ACHN (cell line): ENCODE measurements at regions of chr22 and their contacts with region 1.

Region 1: GRCh38 chr22:26450453-26451185 is 21.6 kb downstream of the ASPHD2 start:
- DNase-seq: no peak

Region 2: DNA sequence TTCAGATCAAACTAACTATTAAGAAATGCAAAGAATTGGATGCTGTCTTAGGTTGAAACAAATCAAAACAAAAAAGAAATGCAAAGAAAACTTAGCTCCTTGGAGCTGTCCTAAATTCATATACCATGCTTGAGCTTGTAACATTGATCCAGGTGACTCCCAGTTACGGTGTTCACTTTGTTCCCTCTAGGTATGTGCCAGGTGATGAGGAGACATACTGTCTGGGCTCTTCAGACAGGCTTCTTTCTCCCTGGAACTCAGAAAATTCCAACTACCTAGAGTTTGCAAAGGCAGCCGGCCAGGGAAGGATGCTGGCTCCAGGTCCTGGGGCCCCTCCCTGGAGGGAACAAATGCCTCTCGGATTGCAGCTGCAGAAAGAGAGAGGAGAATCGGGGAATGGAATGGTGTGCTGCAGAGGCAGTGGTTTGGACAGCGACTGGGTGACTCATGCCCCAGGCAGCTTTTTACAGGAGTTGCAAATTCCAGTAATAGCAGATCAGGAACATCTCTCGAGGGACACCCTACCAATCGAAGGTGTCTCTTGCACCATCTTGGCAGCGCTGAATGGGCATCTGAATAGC is 33.9 kb before region 1 on chr22:
- in situ Hi-C with region 1: loop called (anchors 5 kb)
- DNase-seq: peak; percentile 86